Posterior vena cava (tissue), 2 donors: ENCODE measurements at regions of chr12 and their contacts with region 1.

Region 1: DNA sequence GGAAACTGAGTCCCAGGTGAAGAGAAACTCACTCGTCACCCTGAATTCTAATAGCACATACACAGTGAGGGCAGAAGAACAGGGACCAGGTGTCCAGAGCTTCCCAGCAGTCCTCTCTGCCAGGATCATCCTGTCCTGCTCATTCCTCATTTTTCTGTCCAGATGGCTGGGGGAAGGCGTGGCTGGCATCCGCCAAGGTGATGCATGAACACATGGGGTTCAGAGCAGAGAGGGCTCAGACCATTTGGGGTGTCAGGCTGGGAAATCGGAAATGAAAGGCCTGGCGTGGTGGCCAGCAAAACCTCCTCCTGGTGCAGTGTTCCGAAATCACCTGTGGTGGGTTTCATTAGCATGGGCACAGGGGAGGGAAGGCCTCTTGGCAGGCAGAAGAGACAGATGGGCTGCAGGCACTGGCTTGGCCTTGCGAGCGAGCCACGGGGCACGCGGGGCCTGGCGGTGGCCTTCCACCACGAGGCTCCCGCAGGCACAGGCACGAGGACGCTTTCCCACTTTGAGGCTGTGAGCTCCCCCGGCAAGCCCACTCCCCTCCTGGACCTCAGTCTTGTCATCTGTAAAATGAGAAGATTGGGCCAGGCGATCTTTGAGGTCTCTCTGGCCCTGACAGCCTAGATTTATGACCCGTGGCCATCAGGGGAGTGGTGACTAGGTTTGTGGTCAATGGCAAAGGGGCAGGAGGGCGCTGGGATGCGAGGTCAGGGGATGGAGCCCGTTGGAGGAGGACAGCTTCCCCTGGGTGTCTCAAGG is 68.5 kb downstream of the TSPAN9 start:
- DNase-seq: peak; percentile 66

Region 2: DNA sequence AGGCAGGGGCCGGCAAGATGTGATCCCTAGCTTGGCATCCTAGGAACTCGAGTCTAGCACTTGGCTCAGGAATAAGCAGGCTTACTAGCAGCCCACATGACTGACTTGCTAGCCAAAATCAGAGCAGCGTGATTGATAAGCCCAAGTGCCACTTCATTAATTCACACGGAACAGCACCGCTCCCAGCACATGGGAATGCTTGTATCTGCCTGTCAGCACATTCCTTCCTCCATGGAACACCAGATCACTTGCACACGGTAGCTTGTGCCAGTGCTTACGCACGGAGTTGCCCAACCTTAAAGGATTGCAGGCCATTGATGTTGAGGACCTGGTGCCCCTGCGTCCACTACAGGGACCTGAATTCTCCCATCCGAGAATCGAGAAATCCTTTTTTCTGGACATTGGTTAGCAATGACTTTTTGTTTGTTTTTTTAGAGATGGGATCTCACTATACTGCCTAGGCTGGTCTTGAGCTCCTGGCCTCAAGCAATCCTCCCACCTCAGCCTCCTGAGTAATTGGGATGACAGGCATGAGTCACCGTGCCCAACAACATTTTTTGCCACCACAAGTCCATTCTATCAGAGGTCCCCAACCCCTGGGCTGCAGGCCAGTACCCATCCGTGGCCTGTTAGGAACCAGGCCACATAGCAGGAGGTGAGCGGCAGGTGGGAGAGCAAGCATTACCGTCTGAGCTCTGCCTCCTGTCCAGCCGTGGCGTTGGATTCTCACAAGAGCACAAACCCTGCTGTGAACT is 99.1 kb before region 1 on chr12:
- intact Hi-C with region 1: no loop called
- DNase-seq: peak; percentile 62

Region 3: DNA sequence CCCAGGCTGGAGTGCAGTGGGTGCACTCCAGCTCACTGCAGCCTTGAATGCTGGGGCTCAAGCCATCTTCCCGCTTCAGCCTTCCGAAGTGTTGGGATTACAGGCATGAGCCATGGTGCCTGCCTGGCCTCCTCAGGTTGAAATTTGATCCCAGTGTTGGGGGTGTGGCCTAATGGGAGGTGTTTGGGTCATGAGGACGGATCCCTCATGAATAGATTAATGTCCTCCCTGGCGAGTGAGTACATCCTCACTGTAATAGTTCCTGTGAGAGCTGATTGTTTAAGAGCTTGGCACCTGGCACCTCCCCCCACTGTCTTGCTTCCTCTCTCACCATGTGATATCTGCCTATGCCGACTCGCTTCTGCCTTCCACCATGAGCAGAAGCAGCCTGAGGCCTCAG is 16.1 kb after region 1 on chr12:
- intact Hi-C with region 1: loop called in 1 of 2 experiments (anchors 2 kb)
- DNase-seq: no peak